IMR-90 (cell line): ENCODE measurements at regions of chr10 and their contacts with region 1.

Region 1: GRCh38 chr10:99395750-99396445 is 34.5 kb downstream of the GOT1 start:
- DNase-seq: peak; percentile 83
- ATAC-seq: peak; percentile 69
- H3K4me3 ChIP-seq: no peak overlapping the region
- H3K27ac ChIP-seq: peak overlapping the region; percentile 7; the same call in 1 of the 2 replicates
- H3K4me1 ChIP-seq: peaks cover 12% of the 10 kb centered on the region
- H3K27me3 ChIP-seq: no peaks in the 10 kb centered on the region; the same call in 1 of the 2 replicates
- CTCF ChIP-seq: no peak
- POLR2A ChIP-seq: no peak
- RAD21 ChIP-seq: no peak

Region 2: DNA sequence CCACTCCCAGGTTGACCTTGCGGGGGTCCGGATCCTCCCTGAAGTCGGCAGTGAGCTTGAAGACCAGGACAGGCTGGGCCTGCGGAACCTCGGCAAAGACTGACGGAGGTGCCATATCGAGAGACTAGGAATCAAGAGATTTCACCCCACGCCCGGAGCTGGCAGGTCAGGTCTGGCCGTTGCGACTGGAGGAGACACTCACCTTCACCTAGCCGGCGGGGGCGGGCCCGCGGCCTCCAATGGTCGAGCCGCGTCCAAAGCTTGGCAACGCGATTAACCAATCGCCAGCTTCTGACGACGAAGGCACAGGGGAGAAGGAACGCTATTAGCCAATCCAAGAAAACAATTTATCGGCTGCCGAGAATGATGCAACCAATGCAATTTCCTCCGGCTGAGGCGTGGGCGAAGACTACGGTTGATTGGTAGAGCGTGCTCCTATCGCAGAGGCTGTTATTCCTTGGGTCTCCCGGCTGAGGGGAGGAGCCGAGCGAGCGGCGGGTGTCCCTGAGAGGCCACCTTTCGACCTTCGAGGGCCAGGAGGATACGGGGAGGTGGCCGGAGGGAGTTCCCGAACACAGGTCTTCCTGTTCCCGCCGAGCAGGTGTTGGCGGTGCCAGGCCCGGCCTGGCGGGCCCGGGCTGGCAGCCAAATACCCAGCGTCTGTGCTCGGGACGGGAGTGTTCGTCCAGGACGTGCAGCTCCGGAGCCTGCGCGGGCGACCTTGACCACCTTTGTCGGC is 34.7 kb after region 1 on chr10 and contains the start of gene GOT1:
- CTCF ChIA-PET with region 1: no interaction called
- POLR2A ChIA-PET with region 1: no interaction called
- dilution Hi-C with region 1: no loop called
- in situ Hi-C with region 1: no loop called
- intact Hi-C with region 1: loop called (anchors 1 kb)
- DNase-seq: peak; percentile 99
- ATAC-seq: peak; percentile 97
- H3K4me3 ChIP-seq: peak within 1 kb of the TSS; percentile 73
- H3K27ac ChIP-seq: peak within 1 kb of the TSS; percentile 61
- H3K4me1 ChIP-seq: peaks cover 2% of the 10 kb centered on the region; the same call in 1 of the 2 replicates
- H3K27me3 ChIP-seq: no peaks in the 10 kb centered on the region
- CTCF ChIP-seq: no peak; the same call in 1 of the 2 replicates
- POLR2A ChIP-seq: peak; percentile 94
- RAD21 ChIP-seq: no peak
- total RNA-seq, gene GOT1: 38.6 and 46.1 TPM in 2 replicates

Region 3: DNA sequence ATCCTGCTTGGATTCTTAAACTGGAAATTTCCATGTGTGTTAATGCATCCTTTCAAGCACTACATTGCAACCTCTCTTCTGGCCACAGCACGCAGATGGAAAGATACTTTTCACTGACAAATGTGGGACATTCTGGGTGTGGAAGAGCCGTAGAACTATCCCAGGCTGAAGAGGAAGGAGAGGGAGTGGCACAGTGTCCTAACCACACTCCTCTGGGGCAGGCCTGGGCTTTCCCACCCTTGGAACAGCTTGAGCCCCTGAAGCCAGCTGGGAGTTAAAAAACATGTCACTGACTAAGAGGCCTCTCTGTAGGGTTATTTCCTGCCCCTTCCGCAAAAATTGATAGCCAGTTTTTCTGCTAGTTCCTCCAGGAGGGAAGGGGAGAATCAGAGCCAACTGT is 647.9 kb after region 1 on chr10:
- CTCF ChIA-PET with region 1: no interaction called
- POLR2A ChIA-PET with region 1: no interaction called
- dilution Hi-C with region 1: no loop called
- in situ Hi-C with region 1: no loop called
- intact Hi-C with region 1: no loop called
- DNase-seq: peak; percentile 40
- ATAC-seq: peak; percentile 36
- H3K4me3 ChIP-seq: no peak overlapping the region
- H3K27ac ChIP-seq: peak overlapping the region; percentile 54
- H3K4me1 ChIP-seq: peaks cover 4% of the 10 kb centered on the region
- H3K27me3 ChIP-seq: no peaks in the 10 kb centered on the region
- CTCF ChIP-seq: no peak
- POLR2A ChIP-seq: no peak
- RAD21 ChIP-seq: no peak